ENCODE measurements at regions of chr9 and their contacts with region 1.

Region 1: GRCh38 chr9:134778841-134779411 is 101.7 kb upstream of the FCN2 start:
- DNase-seq: peak; percentile 49
- H3K4me3 ChIP-seq: no peak overlapping the region
- H3K27ac ChIP-seq: no peak overlapping the region
- H3K4me1 ChIP-seq: no peaks in the 10 kb centered on the region
- H3K27me3 ChIP-seq: no peaks in the 10 kb centered on the region
- CTCF ChIP-seq: peak; percentile 68 to 83
- POLR2A ChIP-seq: no peak

Region 2: DNA sequence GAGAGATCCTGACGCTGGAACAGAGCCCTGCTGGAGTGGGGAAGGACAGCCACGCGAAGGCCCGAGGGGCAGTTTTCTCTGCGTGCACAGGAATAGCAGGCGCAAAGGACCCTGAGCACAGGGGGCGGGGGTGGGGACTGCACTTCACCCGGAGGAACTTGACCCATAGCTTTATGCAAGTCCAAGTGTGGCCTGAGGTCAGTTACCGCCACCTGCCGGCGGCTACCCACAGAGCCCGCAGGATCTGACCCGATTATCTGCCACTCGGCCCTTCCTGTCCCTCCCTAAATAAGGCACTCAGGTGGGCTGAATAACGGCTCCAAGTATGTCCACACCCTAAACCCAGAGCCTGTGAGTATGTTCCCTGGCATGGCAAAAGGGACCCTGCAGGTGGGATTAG is 204.1 kb after region 1 on chr9:
- CTCF ChIA-PET with region 1: interaction called, 3 read pairs
- POLR2A ChIA-PET with region 1: no interaction called
- dilution Hi-C with region 1: no loop called
- intact Hi-C with region 1: loop called (anchors 1 kb)
- DNase-seq: peak; percentile 4
- H3K4me3 ChIP-seq: no peak overlapping the region
- H3K27ac ChIP-seq: no peak overlapping the region
- H3K4me1 ChIP-seq: no peaks in the 10 kb centered on the region
- H3K27me3 ChIP-seq: no peaks in the 10 kb centered on the region
- CTCF ChIP-seq: peak; percentile 13 to 33
- POLR2A ChIP-seq: no peak

Region 3: DNA sequence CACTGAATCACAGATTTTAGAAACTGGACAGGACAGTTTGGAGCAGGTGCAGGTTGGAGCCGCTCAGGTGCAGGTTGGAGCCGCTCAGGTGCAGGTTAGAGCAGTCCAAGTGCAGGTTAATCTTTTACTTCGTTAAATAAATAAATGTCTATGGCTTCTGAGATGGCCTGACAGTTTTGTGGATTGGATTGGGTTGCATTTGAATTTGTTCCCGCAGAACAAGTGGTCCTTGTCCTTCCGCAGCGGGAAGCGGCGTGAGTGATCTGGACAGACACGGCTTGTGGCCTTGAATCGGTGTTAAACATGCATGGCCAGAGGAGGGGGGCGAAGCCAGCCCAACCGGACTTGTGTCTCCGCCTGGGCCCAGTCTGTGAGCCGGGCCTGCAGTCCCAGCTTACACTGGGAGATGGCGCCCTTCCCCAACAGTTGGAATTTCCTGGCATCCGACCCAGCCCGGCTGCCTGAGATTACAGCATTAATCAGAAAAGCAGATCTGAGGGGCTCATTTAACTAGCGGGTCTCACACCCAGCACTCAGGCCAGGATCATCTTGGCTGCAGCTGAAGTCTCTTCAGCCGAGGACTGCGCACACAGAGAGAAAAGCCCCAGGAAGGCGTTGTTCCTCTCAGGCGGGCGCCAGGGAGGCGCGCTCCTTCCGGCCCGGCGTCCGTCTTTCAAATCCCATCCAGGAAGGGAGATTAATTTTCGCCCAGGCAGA is 307.1 kb after region 1 on chr9:
- CTCF ChIA-PET with region 1: no interaction called
- POLR2A ChIA-PET with region 1: no interaction called
- dilution Hi-C with region 1: no loop called
- intact Hi-C with region 1: loop called (anchors 10 kb)
- DNase-seq: peak; percentile 72
- H3K4me3 ChIP-seq: no peak overlapping the region
- H3K27ac ChIP-seq: no peak overlapping the region
- H3K4me1 ChIP-seq: no peaks in the 10 kb centered on the region
- H3K27me3 ChIP-seq: peaks cover 15% of the 10 kb centered on the region in 2 experiments
- CTCF ChIP-seq: peak; percentile 89 to 90
- POLR2A ChIP-seq: no peak

Region 4: GRCh38 chr9:135410831-135411473 is 632.0 kb after region 1 on chr9:
- CTCF ChIA-PET with region 1: interaction called, 6 read pairs
- POLR2A ChIA-PET with region 1: no interaction called
- dilution Hi-C with region 1: no loop called
- intact Hi-C with region 1: loop called (anchors 5 kb)
- DNase-seq: no peak
- H3K4me3 ChIP-seq: no peak overlapping the region
- H3K27ac ChIP-seq: no peak overlapping the region
- H3K4me1 ChIP-seq: no peaks in the 10 kb centered on the region
- H3K27me3 ChIP-seq: no peaks in the 10 kb centered on the region
- CTCF ChIP-seq: no peak
- POLR2A ChIP-seq: no peak